T-cell (primary cell): ENCODE measurements at regions of chr17 and their contacts with region 1.

Region 1: GRCh38 chr17:15422392-15422957 is 44.9 kb downstream of the CDRT4 start:
- DNase-seq: no peak
- ATAC-seq: no peak
- H3K4me3 ChIP-seq: no peak overlapping the region
- H3K4me3 Mint-ChIP-seq: no peak overlapping the region
- H3K27ac ChIP-seq: no peak overlapping the region
- H3K27ac Mint-ChIP-seq: no peak overlapping the region
- H3K4me1 ChIP-seq: no peaks in the 10 kb centered on the region
- H3K4me1 Mint-ChIP-seq: no peaks in the 10 kb centered on the region
- H3K27me3 ChIP-seq: no peaks in the 10 kb centered on the region
- H3K27me3 Mint-ChIP-seq: peaks cover 3 to 4% of the 10 kb centered on the region in 2 donors

Region 2: GRCh38 chr17:15220785-15221184 is 201.7 kb before region 1 on chr17:
- CTCF ChIA-PET with region 1: no interaction called
- POLR2A ChIA-PET with region 1: no interaction called
- DNase-seq: no peak
- ATAC-seq: no peak
- H3K4me3 ChIP-seq: no peak overlapping the region
- H3K4me3 Mint-ChIP-seq: no peak overlapping the region
- H3K27ac ChIP-seq: no peak overlapping the region
- H3K27ac Mint-ChIP-seq: no peak overlapping the region
- H3K4me1 ChIP-seq: no peaks in the 10 kb centered on the region
- H3K4me1 Mint-ChIP-seq: no peaks in the 10 kb centered on the region
- H3K27me3 ChIP-seq: peaks cover 0 to 7% of the 10 kb centered on the region in 2 experiments
- H3K27me3 Mint-ChIP-seq: peaks cover 2 to 3% of the 10 kb centered on the region in 2 donors

Region 3: GRCh38 chr17:15291674-15292361 is 130.7 kb before region 1 on chr17:
- CTCF ChIA-PET with region 1: no interaction called
- POLR2A ChIA-PET with region 1: interaction called in 1 of 2 experiments, 12 read pairs
- DNase-seq: no peak
- ATAC-seq: no peak
- H3K4me3 ChIP-seq: no peak overlapping the region
- H3K4me3 Mint-ChIP-seq: no peak overlapping the region
- H3K27ac ChIP-seq: no peak overlapping the region
- H3K27ac Mint-ChIP-seq: no peak overlapping the region
- H3K4me1 ChIP-seq: no peaks in the 10 kb centered on the region
- H3K4me1 Mint-ChIP-seq: no peaks in the 10 kb centered on the region
- H3K27me3 ChIP-seq: peaks cover 0 to 11% of the 10 kb centered on the region in 2 experiments
- H3K27me3 Mint-ChIP-seq: peaks cover 31 to 49% of the 10 kb centered on the region in 2 donors

Region 4: DNA sequence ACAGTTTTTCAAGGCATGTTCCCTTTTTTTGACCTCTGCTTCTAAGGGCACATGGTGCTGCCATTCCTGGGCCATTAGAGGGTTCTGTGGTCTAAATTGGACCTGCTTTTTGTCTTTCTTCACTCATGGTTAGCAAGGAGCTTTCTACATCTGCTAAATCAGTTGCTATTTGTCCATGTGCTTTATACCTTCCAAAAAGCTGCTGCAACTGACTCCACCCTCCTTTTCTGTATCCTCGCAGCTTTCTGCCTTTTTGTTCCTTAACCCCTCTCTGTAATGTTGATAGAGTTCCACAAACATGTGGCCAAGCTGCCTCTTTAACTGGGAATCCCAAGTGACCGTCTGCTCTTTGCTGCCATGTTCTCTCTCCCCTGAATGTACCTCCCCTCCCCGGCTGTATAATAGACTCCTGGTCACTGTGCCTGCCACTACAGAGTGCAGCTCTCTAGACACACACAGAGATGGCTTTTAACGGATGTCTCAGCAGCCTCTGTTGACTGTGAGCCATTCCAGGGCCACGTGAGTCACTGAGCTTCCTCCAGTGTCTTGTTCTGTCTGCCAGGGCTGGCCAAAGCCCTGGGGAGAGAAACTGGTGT is 23.6 kb before region 1 on chr17:
- CTCF ChIA-PET with region 1: no interaction called
- POLR2A ChIA-PET with region 1: no interaction called
- DNase-seq: no peak
- ATAC-seq: no peak
- H3K4me3 ChIP-seq: no peak overlapping the region
- H3K4me3 Mint-ChIP-seq: no peak overlapping the region
- H3K27ac ChIP-seq: no peak overlapping the region
- H3K27ac Mint-ChIP-seq: no peak overlapping the region
- H3K4me1 ChIP-seq: no peaks in the 10 kb centered on the region
- H3K4me1 Mint-ChIP-seq: no peaks in the 10 kb centered on the region
- H3K27me3 ChIP-seq: peaks cover 0 to 16% of the 10 kb centered on the region in 2 experiments
- H3K27me3 Mint-ChIP-seq: peaks cover 4 to 17% of the 10 kb centered on the region in 2 donors